MCF 10A (cell line): ENCODE measurements at regions of chr16 and their contacts with region 1.

Region 1: DNA sequence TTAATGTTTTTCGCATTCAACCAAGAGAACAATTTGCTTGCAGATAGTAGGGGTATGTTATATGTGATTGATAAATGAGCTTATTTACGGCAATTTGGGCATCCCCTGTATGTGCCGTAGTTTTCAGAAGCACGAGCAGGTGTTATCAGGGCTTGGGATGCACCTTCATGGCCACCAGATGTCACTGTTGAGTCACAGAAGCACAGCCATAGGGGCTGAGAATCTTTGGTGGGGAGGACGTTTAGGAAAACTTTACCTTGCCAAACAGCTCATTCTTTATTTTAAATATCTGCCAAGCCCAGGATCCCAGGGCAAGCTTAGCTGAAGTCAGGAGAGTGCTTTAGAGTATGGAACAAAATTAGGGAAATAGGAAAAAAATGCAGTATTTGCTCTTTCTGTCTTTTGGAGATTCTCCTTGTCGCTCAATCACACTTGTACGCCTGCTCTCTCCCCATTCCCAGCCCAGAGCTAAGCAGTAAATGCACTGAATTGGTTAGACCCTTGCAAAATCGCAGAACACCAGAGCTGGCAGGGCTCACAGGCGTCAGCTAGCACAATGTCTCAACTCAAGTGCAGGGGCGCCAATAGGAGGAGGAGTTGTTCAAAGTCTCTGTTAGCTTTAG is 93.6 kb upstream of the MPHOSPH6 start:
- DNase-seq: peak; percentile 75
- H3K4me3 Mint-ChIP-seq: no peak overlapping the region
- H3K27ac Mint-ChIP-seq: no peak overlapping the region
- H3K4me1 Mint-ChIP-seq: no peaks in the 10 kb centered on the region
- H3K27me3 Mint-ChIP-seq: peaks cover 75% of the 10 kb centered on the region
- CTCF ChIP-seq: peak; percentile 91

Region 2: GRCh38 chr16:82091241-82091640 is 172.4 kb before region 1 on chr16:
- CTCF ChIA-PET with region 1: no interaction called
- POLR2A ChIA-PET with region 1: no interaction called
- intact Hi-C with region 1: no loop called
- DNase-seq: no peak
- H3K4me3 Mint-ChIP-seq: no peak overlapping the region
- H3K27ac Mint-ChIP-seq: no peak overlapping the region
- H3K4me1 Mint-ChIP-seq: peaks cover 19% of the 10 kb centered on the region
- H3K27me3 Mint-ChIP-seq: no peaks in the 10 kb centered on the region
- CTCF ChIP-seq: no peak

Region 3: DNA sequence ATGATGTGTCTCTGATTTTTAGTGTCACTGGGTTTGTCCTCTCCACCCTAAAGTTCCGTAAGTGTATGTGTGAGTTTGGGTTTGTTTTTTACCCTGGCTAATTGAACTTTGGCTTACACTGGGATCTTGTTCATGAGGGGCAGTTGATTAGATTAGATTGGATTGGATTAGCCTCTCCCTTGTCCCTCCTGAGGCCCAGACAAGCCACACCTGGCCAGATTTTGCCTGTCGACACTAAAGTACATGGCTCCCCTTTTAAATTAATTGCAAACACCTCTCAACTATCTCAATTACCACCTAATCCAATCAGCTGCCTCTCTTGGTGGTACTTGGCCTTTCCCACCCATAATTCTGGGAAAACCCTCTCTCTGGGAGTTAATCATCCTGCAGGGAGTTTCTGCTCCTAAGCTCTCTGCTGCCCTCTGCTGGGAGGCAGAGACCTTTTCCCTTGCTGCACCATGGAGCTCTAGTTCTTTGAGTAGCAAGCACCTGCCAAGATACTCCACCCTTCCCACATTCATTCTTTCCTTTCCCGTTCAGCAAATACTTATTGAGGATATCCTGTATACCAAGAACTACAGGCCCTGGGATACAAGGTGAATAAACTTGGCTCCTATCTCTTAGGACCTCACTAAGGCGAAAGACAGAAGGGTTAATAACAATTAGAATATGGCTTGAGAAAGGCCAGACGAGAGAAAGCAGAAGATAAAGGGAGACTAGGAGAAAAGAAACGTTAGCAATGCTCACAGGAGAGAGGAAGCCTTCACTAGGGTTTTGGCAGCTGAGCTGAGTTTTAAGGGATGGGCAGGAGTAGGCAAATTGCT is 33.6 kb before region 1 on chr16:
- CTCF ChIA-PET with region 1: interaction called, 11 read pairs
- POLR2A ChIA-PET with region 1: no interaction called
- intact Hi-C with region 1: no loop called
- DNase-seq: peak; percentile 84
- H3K4me3 Mint-ChIP-seq: no peak overlapping the region
- H3K27ac Mint-ChIP-seq: no peak overlapping the region
- H3K4me1 Mint-ChIP-seq: no peaks in the 10 kb centered on the region
- H3K27me3 Mint-ChIP-seq: peaks cover 29% of the 10 kb centered on the region
- CTCF ChIP-seq: peak; percentile 87

Region 4: DNA sequence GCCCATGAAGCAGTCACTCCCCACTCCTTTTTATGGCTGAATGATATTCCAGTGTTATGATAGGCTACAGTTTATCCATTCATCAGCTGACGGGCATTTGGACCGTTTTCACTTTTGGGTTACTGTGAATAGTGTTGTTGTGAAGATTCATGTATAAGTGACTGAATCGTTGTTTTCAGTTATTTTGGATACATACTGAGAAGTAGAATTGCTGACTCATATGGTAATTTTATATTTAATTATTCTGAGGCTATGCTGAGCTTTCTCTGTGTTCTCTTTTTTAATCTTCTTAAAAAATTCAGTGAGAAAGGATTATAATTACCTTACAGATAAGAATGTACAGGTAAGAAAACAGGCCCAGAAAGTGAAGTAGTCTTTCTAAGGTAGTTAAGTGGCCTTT is 24.3 kb after region 1 on chr16:
- CTCF ChIA-PET with region 1: interaction called, 13 read pairs
- POLR2A ChIA-PET with region 1: interaction called, 4 read pairs
- intact Hi-C with region 1: no loop called
- DNase-seq: no peak
- H3K4me3 Mint-ChIP-seq: no peak overlapping the region
- H3K27ac Mint-ChIP-seq: no peak overlapping the region
- H3K4me1 Mint-ChIP-seq: no peaks in the 10 kb centered on the region
- H3K27me3 Mint-ChIP-seq: peaks cover 87% of the 10 kb centered on the region
- CTCF ChIP-seq: no peak

Region 5: DNA sequence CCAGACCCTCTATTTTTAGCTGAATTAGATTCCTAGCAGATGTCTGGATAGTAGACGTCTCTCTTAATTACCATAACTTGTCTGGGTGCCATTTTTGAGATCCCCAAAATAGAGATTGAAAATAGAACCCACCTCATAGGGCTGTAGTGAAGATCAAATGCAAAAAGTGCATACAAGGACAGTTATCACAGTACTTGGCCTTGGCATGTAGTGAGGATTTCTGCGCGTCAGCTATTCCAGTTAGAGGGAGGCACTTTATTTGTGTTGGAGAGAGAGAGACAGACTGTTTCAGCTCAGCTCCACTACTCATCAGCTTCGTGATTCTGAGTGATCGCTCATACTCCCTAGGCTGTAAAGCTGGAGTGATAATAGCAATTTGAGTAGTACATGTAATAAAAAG is 303.5 kb after region 1 on chr16:
- CTCF ChIA-PET with region 1: interaction called, 16 read pairs
- POLR2A ChIA-PET with region 1: no interaction called
- intact Hi-C with region 1: no loop called
- DNase-seq: no peak
- H3K4me3 Mint-ChIP-seq: no peak overlapping the region
- H3K27ac Mint-ChIP-seq: no peak overlapping the region
- H3K4me1 Mint-ChIP-seq: no peaks in the 10 kb centered on the region
- H3K27me3 Mint-ChIP-seq: peaks cover 51% of the 10 kb centered on the region
- CTCF ChIP-seq: no peak

Region 6: DNA sequence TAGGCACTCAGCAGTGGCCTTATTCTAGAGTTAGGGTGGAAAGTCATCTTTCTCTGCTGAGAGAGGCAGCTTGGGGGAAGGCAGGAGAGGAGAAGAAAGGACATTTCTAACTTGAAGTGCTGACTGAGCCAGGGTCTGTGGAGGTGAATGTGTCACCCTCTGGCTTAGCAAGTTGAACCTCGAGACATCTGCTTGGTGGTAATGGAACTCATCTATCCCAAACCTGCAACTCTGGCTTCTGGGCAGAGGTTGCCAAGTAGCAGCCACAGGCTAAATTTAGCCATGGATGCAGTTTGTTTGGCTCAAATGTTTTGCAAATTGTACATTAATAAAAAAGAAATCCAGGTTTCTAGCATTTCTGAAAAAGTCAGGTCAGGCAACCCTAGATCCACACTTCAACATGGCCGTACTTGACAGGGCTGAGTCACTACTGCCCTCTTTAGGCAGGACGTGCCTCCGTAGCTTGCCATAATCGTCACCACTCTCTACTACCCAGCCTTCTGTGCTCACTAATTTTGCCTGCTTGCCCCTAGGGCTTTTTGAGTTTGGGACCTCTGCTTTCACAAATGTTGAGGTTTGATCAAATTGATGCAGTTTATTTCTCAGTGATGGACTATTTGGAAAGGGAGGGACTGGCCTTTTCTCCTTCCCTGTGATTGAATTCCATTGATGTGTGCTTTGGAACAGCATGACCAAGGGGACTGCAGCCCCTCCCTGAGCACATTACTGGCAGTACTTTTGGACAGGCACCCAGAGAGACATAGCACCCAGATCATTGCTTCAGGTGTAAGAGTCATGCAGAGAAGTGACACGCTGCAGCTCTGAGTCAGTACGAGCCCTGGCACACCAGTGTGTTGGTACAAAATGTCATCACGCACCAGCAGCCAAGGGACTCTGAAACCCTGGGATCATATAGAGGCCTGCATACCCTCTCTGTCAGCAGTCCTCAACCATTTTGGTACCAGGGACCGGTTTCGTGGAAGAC is 368.4 kb after region 1 on chr16:
- CTCF ChIA-PET with region 1: interaction called, 55 read pairs
- POLR2A ChIA-PET with region 1: no interaction called
- intact Hi-C with region 1: loop called (anchors 2 kb)
- DNase-seq: peak; percentile 73
- H3K4me3 Mint-ChIP-seq: peak overlapping the region; percentile 29
- H3K27ac Mint-ChIP-seq: peak overlapping the region; percentile 96
- H3K4me1 Mint-ChIP-seq: peaks cover 60% of the 10 kb centered on the region
- H3K27me3 Mint-ChIP-seq: no peaks in the 10 kb centered on the region
- CTCF ChIP-seq: no peak

Region 7: DNA sequence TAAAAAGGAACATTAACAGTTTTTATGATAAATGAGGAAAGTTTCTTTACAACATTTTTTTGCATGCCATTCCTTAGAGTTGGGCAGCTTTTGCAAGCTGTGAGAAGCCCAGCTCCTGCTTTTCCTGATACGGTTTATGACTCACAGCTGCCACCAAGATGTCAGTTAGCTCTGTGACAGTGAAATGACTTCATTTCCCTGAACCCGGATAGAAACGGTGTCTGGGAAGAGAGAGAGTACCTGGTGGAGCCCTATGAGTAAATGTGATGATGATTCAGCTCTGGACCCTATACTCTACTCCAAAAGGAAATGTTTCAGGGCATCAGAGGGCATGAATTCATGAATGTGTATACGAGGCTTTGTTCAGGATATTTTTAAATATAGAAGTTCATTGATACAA is 1177.9 kb after region 1 on chr16:
- CTCF ChIA-PET with region 1: interaction called, 37 read pairs
- POLR2A ChIA-PET with region 1: no interaction called
- intact Hi-C with region 1: loop called (anchors 2 kb)
- DNase-seq: peak; percentile 3
- H3K4me3 Mint-ChIP-seq: no peak overlapping the region
- H3K27ac Mint-ChIP-seq: no peak overlapping the region
- H3K4me1 Mint-ChIP-seq: no peaks in the 10 kb centered on the region
- H3K27me3 Mint-ChIP-seq: no peaks in the 10 kb centered on the region
- CTCF ChIP-seq: no peak